BJ (cell line): ENCODE measurements at regions of chr5 and their contacts with region 1.

Region 1: GRCh38 chr5:154288145-154288544 is 97.6 kb downstream of the GALNT10 start:
- DNase-seq: no peak
- H3K4me3 ChIP-seq: no peak overlapping the region
- H3K27me3 ChIP-seq: no peaks in the 10 kb centered on the region
- CTCF ChIP-seq: no peak

Region 2: DNA sequence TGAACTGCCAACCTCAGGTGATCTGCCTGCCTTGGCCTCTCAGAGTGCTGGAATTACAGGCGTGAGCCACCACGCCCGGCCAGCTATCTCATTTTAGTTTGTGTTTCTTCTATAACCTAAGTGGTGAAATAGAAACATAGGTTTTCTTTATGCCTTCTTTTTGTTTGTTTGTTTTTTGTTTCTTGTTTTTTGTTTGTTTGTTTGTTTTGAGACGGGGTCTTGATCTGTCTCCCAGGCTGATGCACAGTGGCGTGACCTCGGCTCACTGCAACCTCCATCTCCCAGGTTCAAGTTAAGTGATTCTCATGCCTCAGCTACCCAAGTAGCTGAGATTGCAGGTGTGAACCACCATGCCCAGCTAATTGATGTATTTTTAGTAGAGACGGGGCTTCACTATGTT is 345.0 kb after region 1 on chr5:
- CTCF ChIA-PET with region 1: no interaction called
- POLR2A ChIA-PET with region 1: interaction called, 10 read pairs
- DNase-seq: no peak
- H3K4me3 ChIP-seq: no peak overlapping the region
- H3K27me3 ChIP-seq: no peaks in the 10 kb centered on the region
- CTCF ChIP-seq: no peak